ACHN (cell line): ENCODE measurements at regions of chr21 and their contacts with region 1.

Region 1: GRCh38 chr21:29372063-29372802 is 73.5 kb downstream of the BACH1 start:
- DNase-seq: peak; percentile 72

Region 2: GRCh38 chr21:29078869-29079767 is 293.1 kb before region 1 on chr21:
- in situ Hi-C with region 1: loop called (anchors 25 kb)
- DNase-seq: no peak